ENCODE measurements at regions of chr6 and their contacts with region 1.

Region 1: DNA sequence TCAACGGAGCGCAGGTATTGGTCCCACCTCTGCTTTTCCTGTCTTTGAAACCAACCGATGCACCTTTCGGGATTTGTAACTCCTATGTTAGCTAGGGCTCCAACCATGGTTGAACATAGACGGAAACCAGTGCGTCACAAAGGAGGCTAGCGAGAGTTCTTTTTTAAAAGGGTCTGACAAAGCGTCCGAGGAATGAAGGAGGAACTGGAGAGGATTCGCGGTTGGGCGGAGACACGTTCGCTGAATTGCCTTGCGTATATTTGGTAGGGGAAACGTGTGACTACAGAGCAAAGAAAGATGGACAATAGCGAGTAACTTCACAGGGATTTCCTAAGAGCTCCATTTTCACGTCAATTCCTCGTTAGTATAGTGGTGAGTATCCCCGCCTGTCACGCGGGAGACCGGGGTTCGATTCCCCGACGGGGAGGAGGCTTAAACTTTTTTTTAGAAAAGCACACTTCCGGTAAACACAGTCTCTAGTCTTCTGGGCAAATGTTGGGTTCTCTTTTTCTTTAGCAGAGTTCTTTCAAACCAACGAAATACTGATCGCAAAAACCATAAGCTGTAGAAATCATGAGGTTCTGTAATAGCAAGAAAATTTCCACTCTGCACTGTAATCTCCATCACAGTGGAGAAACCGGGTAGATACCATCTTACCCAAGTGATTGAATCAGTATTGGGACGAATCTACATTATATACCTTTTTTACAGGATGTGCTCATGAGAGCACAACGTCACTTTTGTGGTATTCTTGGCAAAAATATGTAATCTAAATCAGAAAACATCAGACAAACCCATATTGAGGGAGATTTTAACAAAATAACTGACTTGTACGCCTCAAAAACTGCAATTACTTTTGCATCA is 6.6 kb upstream of the ZNF184 start:
- DNase-seq: peak; percentile 89
- ATAC-seq: peak; percentile 63
- H3K4me3 Mint-ChIP-seq: no peak overlapping the region
- H3K27ac Mint-ChIP-seq: no peak overlapping the region
- H3K4me1 Mint-ChIP-seq: peaks cover 2% of the 10 kb centered on the region
- H3K27me3 Mint-ChIP-seq: peaks cover 4% of the 10 kb centered on the region

Region 2: GRCh38 chr6:27502508-27503435 is 23.2 kb after region 1 on chr6:
- CTCF ChIA-PET with region 1: interaction called, 4 read pairs
- POLR2A ChIA-PET with region 1: interaction called, 10 read pairs
- DNase-seq: peak; percentile 80
- ATAC-seq: peak; percentile 74
- H3K4me3 Mint-ChIP-seq: peak overlapping the region; percentile 76
- H3K27ac Mint-ChIP-seq: peak overlapping the region; percentile 74
- H3K4me1 Mint-ChIP-seq: peaks cover 22% of the 10 kb centered on the region
- H3K27me3 Mint-ChIP-seq: peaks cover 37% of the 10 kb centered on the region

Region 3: GRCh38 chr6:27728442-27728841 is 248.9 kb after region 1 on chr6:
- CTCF ChIA-PET with region 1: no interaction called
- POLR2A ChIA-PET with region 1: no interaction called
- DNase-seq: no peak
- ATAC-seq: no peak
- H3K4me3 Mint-ChIP-seq: no peak overlapping the region
- H3K27ac Mint-ChIP-seq: no peak overlapping the region
- H3K4me1 Mint-ChIP-seq: no peaks in the 10 kb centered on the region
- H3K27me3 Mint-ChIP-seq: peaks cover 27% of the 10 kb centered on the region

Measured in activated CD8-positive, alpha-beta T cell treated with anti-CD3 and anti-CD28 coated beads, Interleukin-2, amount 10 ng/mL, durations not matched to agents 7 days and 5 days (primary cell).